Activated CD4-positive, alpha-beta memory T cell treated with anti-CD3 and anti-CD28 coated beads, Interleukin-2, amount 10 ng/mL, durations not matched to agents 7 days and 5 days (primary cell): ENCODE measurements at regions of chr19 and their contacts with region 1.

Region 1: DNA sequence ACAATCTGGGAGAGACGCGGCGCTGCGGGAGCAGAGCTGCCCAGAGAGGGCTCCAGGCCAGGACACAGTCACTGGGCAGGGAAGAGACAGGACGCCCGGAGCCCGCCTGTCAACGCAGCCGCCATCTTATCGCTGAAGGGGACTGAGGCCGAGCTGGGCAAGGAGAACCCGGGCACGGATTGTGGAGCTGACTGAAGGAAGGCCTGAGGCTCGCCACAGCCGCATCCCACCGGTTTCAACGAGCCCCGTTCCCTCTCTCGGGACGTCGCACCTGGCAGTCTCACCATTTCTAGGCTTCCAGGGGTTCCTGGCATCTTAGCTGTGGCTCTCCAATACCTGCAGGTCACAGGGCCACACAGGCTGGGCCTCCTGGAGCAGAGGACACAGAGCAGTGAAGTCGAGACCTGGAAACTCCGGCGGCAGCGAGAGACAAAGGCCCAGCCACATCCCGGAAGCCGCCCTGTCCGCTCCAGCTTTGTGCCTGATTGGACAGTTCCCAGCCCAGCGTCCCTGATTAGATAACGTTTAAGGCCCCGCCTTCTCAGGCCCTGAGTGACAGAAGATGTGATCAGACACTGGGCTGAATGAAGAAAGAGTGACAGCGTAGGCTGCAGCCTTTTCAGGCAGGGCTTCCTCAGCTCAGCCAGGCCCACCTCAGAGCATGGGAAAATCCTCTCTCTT is at the start of gene ZNF91:
- DNase-seq: peak; percentile 94
- H3K4me3 Mint-ChIP-seq: peak within 1 kb of the TSS; percentile 96
- H3K27ac Mint-ChIP-seq: peak within 1 kb of the TSS; percentile 98
- H3K4me1 Mint-ChIP-seq: peaks cover 12% of the 10 kb centered on the region
- H3K27me3 Mint-ChIP-seq: no peaks in the 10 kb centered on the region
- total RNA-seq, gene ZNF91: 43.5 to 46.2 TPM

Region 2: DNA sequence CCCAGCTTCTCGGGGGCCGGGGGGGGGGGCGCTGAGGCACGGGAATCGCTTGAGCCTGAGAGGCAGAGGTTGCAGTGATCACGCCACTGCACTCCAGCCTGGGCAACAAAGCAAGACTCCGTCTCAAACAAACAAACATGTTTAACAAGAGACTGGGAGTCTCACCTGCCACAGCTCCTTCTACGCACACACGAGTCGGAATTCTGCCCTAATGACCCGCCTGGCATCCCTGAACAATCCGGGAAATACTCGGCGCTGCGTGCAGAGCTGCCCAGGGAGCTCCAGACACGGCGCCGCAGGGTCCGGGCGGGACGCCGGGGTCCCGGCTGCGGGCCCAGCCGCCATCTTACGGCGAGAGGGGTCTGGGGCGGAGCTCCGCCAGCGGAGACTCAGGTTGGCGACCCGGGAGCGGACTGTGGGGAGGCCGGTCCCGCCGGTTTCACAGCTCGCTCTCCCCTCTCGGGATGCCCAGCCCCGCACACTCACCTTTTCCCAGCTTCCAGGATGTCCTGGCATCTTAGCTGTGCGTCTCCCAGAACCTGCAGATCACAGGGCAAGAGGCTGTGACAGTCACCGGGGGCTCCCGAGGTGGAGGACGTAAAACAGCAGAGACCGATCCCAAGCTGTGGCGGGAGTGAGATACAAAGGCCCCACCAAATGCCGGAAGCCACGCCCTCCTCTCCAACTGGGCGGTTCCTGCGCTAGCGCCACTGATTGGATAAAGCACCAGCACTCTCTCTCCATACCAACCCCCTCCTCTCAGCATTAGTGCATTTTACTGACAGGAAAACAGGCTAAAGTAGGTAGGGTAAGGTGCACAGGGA is 121.4 kb before region 1 on chr19:
- CTCF ChIA-PET with region 1: no interaction called
- POLR2A ChIA-PET with region 1: interaction called, 43 read pairs
- DNase-seq: peak; percentile 92
- H3K4me3 Mint-ChIP-seq: peak overlapping the region; percentile 96
- H3K27ac Mint-ChIP-seq: peak overlapping the region; percentile 92
- H3K4me1 Mint-ChIP-seq: peaks cover 21% of the 10 kb centered on the region
- H3K27me3 Mint-ChIP-seq: no peaks in the 10 kb centered on the region

Region 3: GRCh38 chr19:23305555-23305954 is 89.6 kb before region 1 on chr19:
- CTCF ChIA-PET with region 1: no interaction called
- POLR2A ChIA-PET with region 1: no interaction called
- DNase-seq: no peak
- H3K4me3 Mint-ChIP-seq: no peak overlapping the region
- H3K27ac Mint-ChIP-seq: no peak overlapping the region
- H3K4me1 Mint-ChIP-seq: no peaks in the 10 kb centered on the region
- H3K27me3 Mint-ChIP-seq: no peaks in the 10 kb centered on the region

Region 4: GRCh38 chr19:23409392-23410048 is 14.3 kb after region 1 on chr19:
- CTCF ChIA-PET with region 1: no interaction called
- POLR2A ChIA-PET with region 1: no interaction called
- DNase-seq: no peak
- H3K4me3 Mint-ChIP-seq: no peak overlapping the region
- H3K27ac Mint-ChIP-seq: no peak overlapping the region
- H3K4me1 Mint-ChIP-seq: no peaks in the 10 kb centered on the region
- H3K27me3 Mint-ChIP-seq: no peaks in the 10 kb centered on the region

Region 5: DNA sequence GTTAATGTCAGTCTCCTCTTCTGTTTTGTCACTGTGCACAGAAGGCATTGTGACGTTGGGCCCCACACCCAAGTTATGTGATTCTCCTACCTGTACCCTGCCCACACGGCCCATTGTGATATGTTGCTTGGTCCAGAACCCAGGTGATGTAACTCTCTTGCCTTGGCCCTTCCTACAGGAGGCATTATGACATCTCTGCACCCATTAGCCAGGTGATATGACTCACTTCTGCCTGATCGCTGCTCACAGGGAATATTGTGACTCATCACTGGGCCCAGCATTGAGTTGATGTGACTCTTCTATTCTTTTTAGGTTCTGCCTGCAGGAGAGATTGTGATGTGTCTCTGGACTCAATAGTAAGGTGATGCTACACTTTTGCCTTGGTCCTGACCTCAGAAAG is 65.5 kb after region 1 on chr19:
- CTCF ChIA-PET with region 1: no interaction called
- POLR2A ChIA-PET with region 1: no interaction called
- DNase-seq: no peak
- H3K4me3 Mint-ChIP-seq: no peak overlapping the region
- H3K27ac Mint-ChIP-seq: no peak overlapping the region
- H3K4me1 Mint-ChIP-seq: no peaks in the 10 kb centered on the region
- H3K27me3 Mint-ChIP-seq: no peaks in the 10 kb centered on the region

Region 6: DNA sequence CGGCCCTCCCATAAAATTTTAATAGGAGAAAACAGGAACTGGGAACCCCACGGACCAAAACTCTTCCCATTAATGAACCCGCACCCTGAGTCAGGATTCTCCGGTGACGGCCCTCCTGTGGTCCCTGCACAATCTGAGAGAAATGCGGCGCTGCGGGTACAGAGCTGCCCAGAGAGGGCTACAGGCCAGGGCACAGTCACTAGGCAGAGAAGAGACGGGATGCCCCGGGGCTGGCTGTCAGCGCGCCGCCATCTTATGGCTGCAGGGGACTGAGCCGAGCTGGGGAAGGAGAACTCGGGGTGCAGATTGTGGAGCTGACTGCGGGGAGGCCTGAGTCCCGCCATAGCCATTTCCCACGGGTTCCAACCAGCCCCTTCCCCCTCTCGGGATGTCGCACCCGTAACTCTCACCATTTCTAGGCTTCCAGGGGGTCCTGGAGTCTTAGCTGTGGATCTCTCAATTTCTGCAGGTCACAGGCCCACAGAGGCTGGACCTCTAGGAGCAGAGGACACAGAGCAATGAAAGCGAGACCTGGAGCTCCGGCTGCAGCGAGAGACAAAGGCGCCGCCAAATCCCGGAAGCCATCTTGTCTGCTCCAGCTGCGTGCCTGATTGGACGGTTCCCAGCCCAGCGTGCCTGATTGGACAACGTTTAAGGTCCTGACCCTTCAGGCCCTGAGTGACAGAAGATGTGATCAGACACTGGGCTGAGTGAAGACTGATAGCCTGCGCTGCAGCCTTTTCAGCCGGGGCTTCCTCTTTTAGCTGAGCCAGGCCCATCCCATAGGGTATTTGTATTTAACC is 291.6 kb after region 1 on chr19 and contains the start of gene ZNF675:
- CTCF ChIA-PET with region 1: interaction called, 3 read pairs
- POLR2A ChIA-PET with region 1: interaction called, 21 read pairs
- DNase-seq: peak; percentile 91
- H3K4me3 Mint-ChIP-seq: peak within 1 kb of the TSS; percentile 98
- H3K27ac Mint-ChIP-seq: peak within 1 kb of the TSS; percentile 96
- H3K4me1 Mint-ChIP-seq: peaks cover 18% of the 10 kb centered on the region
- H3K27me3 Mint-ChIP-seq: no peaks in the 10 kb centered on the region
- total RNA-seq, gene ZNF675: 18.1 to 19.9 TPM

Region 7: GRCh38 chr19:23914402-23915301 is 519.5 kb after region 1 on chr19 and contains the start of gene ZNF726:
- CTCF ChIA-PET with region 1: no interaction called
- POLR2A ChIA-PET with region 1: interaction called, 20 read pairs
- DNase-seq: peak; percentile 89
- H3K4me3 Mint-ChIP-seq: peak within 1 kb of the TSS; percentile 93
- H3K27ac Mint-ChIP-seq: peak within 1 kb of the TSS; percentile 89
- H3K4me1 Mint-ChIP-seq: peaks cover 16% of the 10 kb centered on the region
- H3K27me3 Mint-ChIP-seq: no peaks in the 10 kb centered on the region
- total RNA-seq, gene ZNF726: 8.7 to 9.7 TPM

Region 8: GRCh38 chr19:24086974-24087595 is 691.9 kb after region 1 on chr19 and contains the start of gene ZNF254:
- CTCF ChIA-PET with region 1: no interaction called
- POLR2A ChIA-PET with region 1: interaction called, 15 read pairs
- DNase-seq: peak; percentile 85
- H3K4me3 Mint-ChIP-seq: peak within 1 kb of the TSS; percentile 93
- H3K27ac Mint-ChIP-seq: peak within 1 kb of the TSS; percentile 92
- H3K4me1 Mint-ChIP-seq: peaks cover 11% of the 10 kb centered on the region
- H3K27me3 Mint-ChIP-seq: no peaks in the 10 kb centered on the region
- total RNA-seq, gene ZNF254: 9.9 to 10.2 TPM